Transverse colon (tissue), 4 donors: ENCODE measurements at regions of chrX and their contacts with region 1.

Region 1: GRCh38 chrX:111731351-111731750 is 50.4 kb downstream of the ALG13 start:
- DNase-seq: no peak
- H3K4me3 ChIP-seq: no peak overlapping the region
- H3K27ac ChIP-seq: no peak overlapping the region
- H3K4me1 ChIP-seq: no peaks in the 10 kb centered on the region
- H3K27me3 ChIP-seq: no peaks in the 10 kb centered on the region
- CTCF ChIP-seq: no peak
- EP300 ChIP-seq: no peak
- POLR2A ChIP-seq: no peak

Region 2: GRCh38 chrX:110578270-110578669 is 1153.1 kb before region 1 on chrX:
- in situ Hi-C with region 1: no loop called
- intact Hi-C with region 1: loop called (anchors 10 kb)
- DNase-seq: no peak
- H3K4me3 ChIP-seq: no peak overlapping the region
- H3K27ac ChIP-seq: no peak overlapping the region
- H3K4me1 ChIP-seq: no peaks in the 10 kb centered on the region
- H3K27me3 ChIP-seq: no peaks in the 10 kb centered on the region
- CTCF ChIP-seq: no peak
- EP300 ChIP-seq: no peak
- POLR2A ChIP-seq: no peak

Region 3: GRCh38 chrX:111052478-111052877 is 678.9 kb before region 1 on chrX:
- in situ Hi-C with region 1: no loop called
- intact Hi-C with region 1: no loop called
- DNase-seq: no peak
- H3K4me3 ChIP-seq: no peak overlapping the region
- H3K27ac ChIP-seq: no peak overlapping the region
- H3K4me1 ChIP-seq: no peaks in the 10 kb centered on the region
- H3K27me3 ChIP-seq: no peaks in the 10 kb centered on the region
- CTCF ChIP-seq: no peak
- EP300 ChIP-seq: no peak
- POLR2A ChIP-seq: no peak